Colonic mucosa (tissue), 4 donors: ENCODE measurements at regions of chr1 and their contacts with region 1.

Region 1: GRCh38 chr1:31789259-31790065 is 25.3 kb upstream of the ADGRB2 start:
- DNase-seq: peak; percentile 99
- H3K4me3 ChIP-seq: peak overlapping the region; percentile 43
- H3K27ac ChIP-seq: peak overlapping the region; percentile 75
- H3K4me1 ChIP-seq: no peaks in the 10 kb centered on the region
- H3K27me3 ChIP-seq: no peaks in the 10 kb centered on the region
- CTCF ChIP-seq: peak; percentile 64

Region 2: DNA sequence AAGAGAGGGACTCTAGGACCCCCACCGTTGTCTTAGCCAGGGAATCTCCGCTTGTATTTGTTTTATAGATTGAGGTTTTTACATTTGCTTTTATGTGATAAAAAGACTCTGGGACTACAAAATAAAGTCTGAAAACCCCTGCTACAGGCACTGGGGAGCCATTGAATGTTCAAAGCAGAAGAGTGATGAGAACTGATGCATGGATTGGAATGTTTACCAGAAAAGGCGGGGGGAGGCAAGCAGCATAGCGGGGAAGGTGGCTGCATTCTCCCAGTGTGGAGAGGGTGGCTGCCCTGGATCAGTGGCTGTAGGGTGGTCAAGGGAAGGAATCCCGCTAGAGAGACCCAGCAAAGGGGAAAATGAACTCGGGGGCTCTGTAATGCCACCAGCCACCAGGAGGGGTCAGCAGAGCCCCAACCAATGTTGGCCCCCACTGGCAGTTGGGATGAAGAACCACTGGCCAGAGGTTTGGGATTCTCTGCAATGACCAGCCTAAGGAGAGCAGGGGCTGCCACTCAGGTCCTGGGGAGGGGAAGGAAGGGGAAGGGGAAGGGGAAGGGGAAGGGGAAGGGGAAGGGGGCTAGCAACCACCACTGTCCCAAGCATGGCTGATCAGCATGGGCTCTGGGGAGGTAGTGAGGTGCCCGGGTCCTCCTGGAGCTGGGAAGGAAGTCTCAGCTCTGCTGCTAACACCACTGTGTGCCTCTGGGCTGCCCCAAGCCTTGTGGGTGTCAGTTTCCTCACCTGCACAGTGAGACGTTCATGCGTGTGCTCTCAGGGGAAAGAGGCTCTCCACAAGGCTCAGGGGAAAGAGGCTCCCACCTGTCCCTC is 125.6 kb before region 1 on chr1:
- intact Hi-C with region 1: loop called (anchors 2 kb)
- DNase-seq: peak; percentile 65
- H3K4me3 ChIP-seq: no peak overlapping the region
- H3K27ac ChIP-seq: no peak overlapping the region
- H3K4me1 ChIP-seq: peaks cover 5% of the 10 kb centered on the region
- H3K27me3 ChIP-seq: no peaks in the 10 kb centered on the region
- CTCF ChIP-seq: peak; percentile 92

Region 3: DNA sequence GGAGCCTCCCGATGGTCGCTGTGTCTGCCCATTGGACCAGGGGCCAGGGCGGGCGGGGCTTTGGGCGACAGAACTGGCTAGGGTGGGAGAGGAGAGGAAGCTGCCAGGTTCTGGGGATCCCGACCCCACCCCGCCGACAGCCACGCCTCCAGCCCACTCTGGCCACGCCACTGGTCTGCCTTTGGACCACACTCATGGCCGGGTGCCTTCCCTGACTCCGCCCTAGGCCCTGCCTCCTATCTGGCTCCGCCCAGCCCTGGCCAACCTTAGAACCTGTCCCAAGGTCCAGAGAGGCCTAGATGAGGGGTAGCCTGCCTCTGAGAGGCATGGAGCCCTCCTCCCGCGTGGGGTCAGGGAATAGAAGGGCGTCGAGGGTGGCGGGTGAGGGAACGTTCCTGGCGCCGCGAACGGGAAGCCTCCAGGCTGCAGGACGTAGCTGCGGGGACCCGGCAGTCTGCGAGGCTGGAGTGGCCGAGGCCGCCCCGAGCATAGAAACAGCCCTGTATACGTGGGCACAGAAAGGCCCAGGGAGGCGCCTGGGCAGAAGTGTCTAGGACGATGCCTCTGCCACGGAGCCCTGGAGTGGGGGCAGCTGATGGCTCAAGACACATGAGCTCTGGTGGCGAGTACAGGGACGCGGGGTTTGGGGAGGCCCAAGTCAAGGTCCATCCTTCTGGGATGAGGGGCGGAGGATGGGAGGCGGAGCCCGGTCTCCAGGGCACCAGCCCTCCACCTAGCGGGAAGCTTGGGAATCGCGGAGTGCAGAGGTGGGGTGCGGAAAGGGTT is 74.2 kb before region 1 on chr1:
- intact Hi-C with region 1: loop called (anchors 10 kb)
- DNase-seq: peak; percentile 97
- H3K4me3 ChIP-seq: peak overlapping the region; percentile 31
- H3K27ac ChIP-seq: peak overlapping the region; percentile 89
- H3K4me1 ChIP-seq: peaks cover 11% of the 10 kb centered on the region
- H3K27me3 ChIP-seq: no peaks in the 10 kb centered on the region
- CTCF ChIP-seq: peak; percentile 86

Region 4: GRCh38 chr1:31769720-31770390 is 19.6 kb before region 1 on chr1:
- intact Hi-C with region 1: loop called (anchors 2 kb)
- DNase-seq: no peak
- H3K4me3 ChIP-seq: no peak overlapping the region
- H3K27ac ChIP-seq: no peak overlapping the region
- H3K4me1 ChIP-seq: peaks cover 8% of the 10 kb centered on the region
- H3K27me3 ChIP-seq: peaks cover 39% of the 10 kb centered on the region
- CTCF ChIP-seq: no peak